Astrocyte of the cerebellum (primary cell): ENCODE measurements at regions of chr5 and their contacts with region 1.

Region 1: DNA sequence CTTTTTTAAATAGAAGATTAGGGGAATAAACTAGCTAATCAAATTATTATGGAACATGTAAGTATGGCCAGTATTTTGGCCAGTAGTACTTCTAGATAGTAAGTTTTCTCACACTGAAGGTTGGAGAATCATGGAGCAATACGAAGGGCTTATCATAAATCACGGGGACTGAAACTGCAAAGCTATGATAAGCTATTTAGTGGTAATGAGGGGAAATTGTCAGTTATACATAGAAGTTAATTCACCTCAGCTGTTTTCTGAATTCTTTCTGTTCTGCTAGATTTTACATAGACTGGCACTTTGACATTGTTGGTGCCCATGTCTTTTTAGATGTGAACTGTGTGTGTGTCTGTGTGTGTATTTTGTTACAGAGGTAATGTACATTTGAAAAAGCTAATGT is 34.5 kb upstream of the FAM151B start:
- DNase-seq: no peak
- H3K4me3 ChIP-seq: no peak overlapping the region
- CTCF ChIP-seq: no peak

Region 2: GRCh38 chr5:80516826-80517225 is 63.5 kb after region 1 on chr5:
- in situ Hi-C with region 1: loop called (anchors 5 kb)
- DNase-seq: peak; percentile 58
- H3K4me3 ChIP-seq: no peak overlapping the region
- CTCF ChIP-seq: no peak